ENCODE measurements at regions of chr2 and their contacts with region 1.

Region 1: DNA sequence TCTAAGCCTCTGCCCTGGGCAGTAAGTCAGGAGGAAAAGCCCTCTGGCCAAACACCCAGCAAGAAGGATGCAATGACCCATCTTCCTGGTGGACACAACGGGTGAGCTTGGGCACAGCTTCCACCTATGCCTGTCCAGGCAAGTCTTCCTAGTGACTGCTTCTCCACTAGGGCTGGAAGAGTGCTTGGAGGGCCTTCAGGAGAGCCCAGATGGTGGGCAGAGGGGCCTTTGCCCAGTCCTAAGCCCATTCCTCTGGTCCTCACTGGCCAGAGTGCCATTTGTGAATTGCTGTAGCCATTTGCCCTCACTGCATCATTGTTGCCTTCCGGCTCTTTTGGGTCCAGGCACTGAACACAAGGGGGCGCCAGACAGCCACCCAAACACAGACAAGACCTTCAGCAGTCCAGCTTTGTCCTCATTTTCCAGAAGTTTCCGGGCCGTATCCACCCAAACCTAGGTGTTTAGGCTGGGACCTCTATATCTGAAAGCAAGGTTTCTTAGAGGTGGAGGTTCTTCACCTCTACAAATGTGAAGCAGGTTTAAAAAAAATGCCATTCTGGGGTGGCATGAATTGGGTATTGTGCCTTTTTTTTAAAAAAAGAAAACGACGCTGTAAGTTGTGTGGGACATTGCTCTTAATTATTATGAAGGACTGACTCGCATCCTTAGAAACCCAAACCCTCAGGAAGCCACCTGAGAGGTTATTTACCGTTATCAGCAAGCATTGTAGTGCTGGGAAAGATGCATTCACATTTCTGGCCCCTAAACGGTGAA is 29.5 kb downstream of the PAX8 start:
- DNase-seq: peak; percentile 65 to 71
- H3K4me3 ChIP-seq: no peak overlapping the region
- H3K27ac ChIP-seq: no peak overlapping the region
- H3K4me1 ChIP-seq: no peaks in the 10 kb centered on the region
- H3K27me3 ChIP-seq: no peaks in the 10 kb centered on the region
- CTCF ChIP-seq: peak; percentile 81 to 87 (median 85)
- POLR2A ChIP-seq: no peak

Region 2: GRCh38 chr2:113342650-113343049 is 93.5 kb after region 1 on chr2:
- intact Hi-C with region 1: no loop called
- DNase-seq: no peak
- H3K4me3 ChIP-seq: no peak overlapping the region
- H3K27ac ChIP-seq: no peak overlapping the region
- H3K4me1 ChIP-seq: no peaks in the 10 kb centered on the region
- H3K27me3 ChIP-seq: no peaks in the 10 kb centered on the region
- CTCF ChIP-seq: no peak
- POLR2A ChIP-seq: no peak

Region 3: GRCh38 chr2:113370478-113371091 is 121.4 kb after region 1 on chr2:
- intact Hi-C with region 1: loop called (anchors 5 kb)
- DNase-seq: peak; percentile 60 to 62
- H3K4me3 ChIP-seq: no peak overlapping the region
- H3K27ac ChIP-seq: no peak overlapping the region
- H3K4me1 ChIP-seq: no peaks in the 10 kb centered on the region
- H3K27me3 ChIP-seq: no peaks in the 10 kb centered on the region
- CTCF ChIP-seq: peak; percentile 65 to 86 (median 82)
- POLR2A ChIP-seq: no peak

Region 4: GRCh38 chr2:113390124-113390849 is 141.1 kb after region 1 on chr2:
- intact Hi-C with region 1: loop called (anchors 10 kb)
- DNase-seq: peak; percentile 60 to 66
- H3K4me3 ChIP-seq: peak overlapping the region in 1 of 2 donors; percentile 14
- H3K27ac ChIP-seq: peak overlapping the region in 1 of 2 donors; percentile 27
- H3K4me1 ChIP-seq: no peaks in the 10 kb centered on the region
- H3K27me3 ChIP-seq: no peaks in the 10 kb centered on the region
- CTCF ChIP-seq: peak; percentile 47 to 99 (median 79)
- POLR2A ChIP-seq: no peak

Region 5: DNA sequence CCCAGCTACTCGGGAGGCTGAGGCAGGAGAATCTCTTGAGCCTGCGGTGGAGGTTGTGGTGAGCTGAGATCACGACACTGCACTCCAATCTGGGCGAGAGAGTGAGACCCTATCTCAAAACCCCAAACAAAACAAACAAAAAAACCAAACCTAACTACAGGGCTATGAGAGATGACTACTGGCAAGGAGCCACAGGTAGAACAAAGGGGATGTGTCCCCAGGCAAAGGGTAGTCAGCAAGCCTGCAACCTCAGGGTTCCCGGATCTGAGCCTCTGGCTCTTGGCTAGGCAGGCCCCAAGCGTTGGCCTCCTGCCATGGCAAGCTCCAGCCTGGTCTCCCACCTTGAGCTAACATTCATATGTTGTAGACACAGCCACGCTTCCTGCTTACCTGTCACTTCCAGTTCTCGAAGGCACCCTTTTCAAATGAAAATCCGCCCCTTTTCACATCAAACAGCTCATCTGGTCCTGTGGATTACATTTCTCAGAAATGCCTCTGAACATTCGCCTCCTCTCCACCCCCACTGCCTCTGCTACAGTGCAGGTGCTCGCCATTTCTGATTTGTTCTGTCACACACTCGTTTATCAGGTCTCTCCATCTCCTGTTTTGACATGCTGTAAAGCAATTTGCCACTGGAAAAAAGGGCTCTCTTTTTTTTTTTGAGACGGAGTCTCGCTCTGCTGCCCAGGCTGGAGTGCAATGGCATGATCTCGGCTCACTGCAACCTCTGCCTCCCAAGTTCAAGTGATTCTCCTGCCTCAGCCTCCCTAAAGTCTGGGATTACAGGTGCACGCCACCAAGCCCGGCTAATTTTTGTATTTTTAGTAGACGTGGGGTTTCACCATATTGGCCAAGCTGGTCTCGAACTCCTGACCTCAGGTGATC is 627.6 kb after region 1 on chr2:
- intact Hi-C with region 1: no loop called
- DNase-seq: no peak
- H3K4me3 ChIP-seq: no peak overlapping the region
- H3K27ac ChIP-seq: no peak overlapping the region
- H3K4me1 ChIP-seq: no peaks in the 10 kb centered on the region
- H3K27me3 ChIP-seq: no peaks in the 10 kb centered on the region
- CTCF ChIP-seq: no peak
- POLR2A ChIP-seq: no peak